ENCODE measurements at regions of chr14 and their contacts with region 1.

Region 1: GRCh38 chr14:67666750-67667449 is 7.5 kb downstream of the VTI1B start:
- DNase-seq: peak in 19 of 35 experiments; percentile 6 to 75 (median 16)
- ATAC-seq: peak; percentile 73 to 90 (median 78)
- H3K4me3 ChIP-seq: no peak overlapping the region
- H3K4me3 Mint-ChIP-seq: no peak overlapping the region
- H3K27ac ChIP-seq: no peak overlapping the region
- H3K27ac Mint-ChIP-seq: no peak overlapping the region
- H3K4me1 ChIP-seq: peaks cover 2 to 11% of the 10 kb centered on the region in 2 experiments
- H3K4me1 Mint-ChIP-seq: peaks cover 68 to 72% (median 69%) of the 10 kb centered on the region in 3 donors
- H3K27me3 ChIP-seq: no peaks in the 10 kb centered on the region
- H3K27me3 Mint-ChIP-seq: no peaks in the 10 kb centered on the region

Region 2: GRCh38 chr14:67426983-67427606 is 239.8 kb before region 1 on chr14:
- CTCF ChIA-PET with region 1: interaction called, 6 to 10 read pairs
- POLR2A ChIA-PET with region 1: no interaction called
- DNase-seq: peak; percentile 53 to 86 (median 69)
- ATAC-seq: peak; percentile 86 to 91 (median 88)
- H3K4me3 ChIP-seq: no peak overlapping the region
- H3K4me3 Mint-ChIP-seq: no peak overlapping the region
- H3K27ac ChIP-seq: no peak overlapping the region
- H3K27ac Mint-ChIP-seq: no peak overlapping the region
- H3K4me1 ChIP-seq: peaks cover 0 to 8% of the 10 kb centered on the region in 2 experiments
- H3K4me1 Mint-ChIP-seq: peaks cover 0 to 1% (median 0%) of the 10 kb centered on the region in 3 donors
- H3K27me3 ChIP-seq: peaks cover 0 to 41% of the 10 kb centered on the region in 2 experiments
- H3K27me3 Mint-ChIP-seq: peaks cover 11 to 18% of the 10 kb centered on the region in 2 donors

Region 3: DNA sequence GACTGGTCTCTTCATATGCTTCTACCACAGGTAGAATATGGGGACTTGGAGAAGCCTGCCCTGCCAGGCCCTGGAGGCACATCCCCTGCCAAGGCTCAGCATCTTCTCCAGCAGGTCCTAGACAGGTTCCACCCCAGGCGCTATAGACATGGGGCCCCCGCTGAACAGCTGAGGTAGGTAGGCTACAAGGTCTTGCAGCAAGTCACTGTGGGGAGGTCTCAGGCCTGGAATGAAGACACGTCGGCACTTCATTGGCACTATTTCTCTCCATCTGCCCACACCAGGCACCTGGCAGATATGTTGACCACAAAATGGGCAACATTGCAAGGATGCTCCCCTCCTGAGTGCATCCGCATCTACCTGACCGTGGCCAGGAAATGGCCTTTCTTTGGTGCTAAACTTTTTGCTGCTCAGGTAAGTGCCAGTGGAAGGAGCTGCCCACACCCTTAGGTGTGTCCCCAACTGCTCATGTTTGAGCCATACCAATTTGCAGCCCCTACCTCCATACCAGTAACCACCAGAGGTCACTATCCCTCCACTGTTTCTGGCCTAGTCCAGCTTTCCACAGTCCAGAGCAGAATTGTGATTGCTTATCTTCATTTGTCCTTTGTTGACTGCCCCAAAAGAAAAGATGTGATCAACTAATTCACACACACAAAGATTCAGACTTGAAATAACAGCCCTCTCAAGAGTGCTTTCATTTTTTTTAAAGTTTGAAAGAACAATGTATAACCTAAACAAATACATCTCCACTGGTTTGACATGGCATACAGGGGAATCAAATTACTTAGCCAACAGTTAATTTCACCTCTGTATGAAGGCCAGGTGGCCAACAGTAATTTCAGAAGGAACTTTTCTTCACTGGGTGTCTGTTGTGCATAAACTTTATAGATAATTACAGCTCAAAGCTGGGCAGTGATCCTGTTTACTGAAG is 82.9 kb before region 1 on chr14:
- CTCF ChIA-PET with region 1: interaction called, 3 to 18 read pairs
- POLR2A ChIA-PET with region 1: interaction called in 1 of 2 experiments, 3 read pairs
- DNase-seq: peak in 11 of 35 experiments; percentile 10 to 63 (median 19)
- ATAC-seq: peak; percentile 52 to 73 (median 64)
- H3K4me3 ChIP-seq: no peak overlapping the region
- H3K4me3 Mint-ChIP-seq: no peak overlapping the region
- H3K27ac ChIP-seq: no peak overlapping the region
- H3K27ac Mint-ChIP-seq: no peak overlapping the region
- H3K4me1 ChIP-seq: no peaks in the 10 kb centered on the region
- H3K4me1 Mint-ChIP-seq: no peaks in the 10 kb centered on the region
- H3K27me3 ChIP-seq: no peaks in the 10 kb centered on the region
- H3K27me3 Mint-ChIP-seq: no peaks in the 10 kb centered on the region

Region 4: DNA sequence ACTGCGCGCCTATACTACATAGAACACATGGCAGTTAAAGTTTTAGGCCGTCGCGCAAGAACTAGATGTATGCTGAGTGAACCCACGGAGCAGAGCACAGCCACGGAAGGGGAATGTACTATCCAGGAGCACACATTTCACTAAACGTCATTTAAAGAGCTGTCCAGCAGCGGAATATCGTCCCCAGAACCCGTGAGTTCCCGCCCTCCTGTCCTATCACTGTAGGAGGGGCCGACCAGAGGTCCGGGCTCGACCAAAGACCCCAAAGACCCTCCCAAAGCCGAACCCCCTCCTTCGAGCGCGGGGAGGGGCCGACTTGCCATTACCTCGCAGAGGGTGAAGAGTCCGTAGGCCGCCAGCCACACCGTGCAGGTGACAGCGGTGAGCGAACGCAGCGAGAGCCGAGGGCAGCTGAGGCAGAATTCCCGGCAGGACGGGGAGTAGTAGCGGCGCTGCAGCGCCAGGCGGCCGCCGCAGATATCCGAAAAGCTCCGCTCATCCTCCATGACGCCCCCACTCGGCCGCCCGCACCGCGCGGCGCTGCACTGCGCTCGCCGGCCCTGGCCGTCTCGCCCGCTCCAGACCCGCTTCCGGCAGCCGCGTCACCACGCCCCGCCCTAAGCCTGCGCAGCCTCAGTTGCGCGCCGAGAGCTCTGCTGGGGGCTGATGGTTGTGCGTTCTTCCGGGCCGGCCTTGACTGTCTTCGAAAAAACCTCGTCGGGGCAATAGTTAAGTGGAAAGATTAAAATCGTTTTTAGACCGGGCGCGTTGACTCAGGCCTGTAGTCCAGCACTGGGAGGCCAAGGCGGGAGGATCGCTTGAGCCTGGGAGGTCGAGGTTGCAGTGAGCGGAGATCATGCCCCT is 67.0 kb before region 1 on chr14 and contains the start of gene PIGH:
- CTCF ChIA-PET with region 1: interaction called in 1 of 2 experiments, 11 read pairs
- POLR2A ChIA-PET with region 1: interaction called in 1 of 2 experiments, 4 read pairs
- DNase-seq: peak; percentile 84 to 97 (median 92)
- ATAC-seq: peak; percentile 97
- H3K4me3 ChIP-seq: peak within 1 kb of the TSS; percentile 88 to 90
- H3K4me3 Mint-ChIP-seq: peak within 1 kb of the TSS; percentile 87 to 98 (median 98)
- H3K27ac ChIP-seq: peak within 1 kb of the TSS; percentile 87
- H3K27ac Mint-ChIP-seq: peak within 1 kb of the TSS; percentile 94 to 95
- H3K4me1 ChIP-seq: peaks cover 11 to 14% of the 10 kb centered on the region in 2 experiments
- H3K4me1 Mint-ChIP-seq: peaks cover 37 to 52% (median 48%) of the 10 kb centered on the region in 3 donors
- H3K27me3 ChIP-seq: no peaks in the 10 kb centered on the region
- H3K27me3 Mint-ChIP-seq: no peaks in the 10 kb centered on the region
- total RNA-seq, gene PIGH: 28.7 to 46.8 (median 35.1) TPM

Region 5: DNA sequence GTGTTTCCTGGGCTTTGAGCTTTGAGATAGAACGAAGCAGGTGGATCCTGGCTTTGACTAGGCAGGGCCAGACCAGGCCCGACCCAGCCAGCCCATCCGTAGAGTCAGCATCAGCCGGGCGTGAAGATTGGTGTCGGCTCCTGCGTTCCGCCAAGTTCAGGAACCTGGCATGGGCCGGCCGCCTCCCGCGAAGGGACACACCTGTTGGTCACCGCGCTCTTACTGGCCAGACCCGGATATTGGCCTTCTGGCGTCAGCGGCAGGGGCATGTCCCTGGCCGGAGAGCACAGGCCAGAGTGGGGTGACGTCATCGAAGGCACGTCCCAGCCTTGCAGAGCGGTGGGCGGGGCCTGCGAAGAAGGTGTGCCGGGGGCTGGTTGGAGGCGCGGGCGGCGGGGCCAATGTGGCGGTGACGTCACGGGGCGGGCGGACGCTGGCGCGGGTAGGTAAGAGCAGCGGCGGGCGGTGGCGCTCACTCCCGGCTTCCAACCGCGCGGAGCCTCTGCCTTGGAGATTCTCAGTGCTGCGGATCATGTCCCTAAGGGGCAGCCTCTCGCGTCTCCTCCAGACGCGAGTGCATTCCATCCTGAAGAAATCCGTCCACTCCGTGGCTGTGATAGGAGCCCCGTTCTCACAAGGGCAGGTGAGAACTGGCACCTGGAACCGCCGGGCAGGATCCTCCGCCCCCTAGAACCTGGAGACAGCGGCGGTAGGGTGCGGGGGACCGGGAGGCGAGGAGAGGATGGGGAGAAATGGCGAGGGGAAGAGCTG is 47.3 kb before region 1 on chr14 and contains the start of gene ARG2:
- CTCF ChIA-PET with region 1: interaction called, 14 to 42 read pairs
- POLR2A ChIA-PET with region 1: interaction called in 1 of 2 experiments, 4 read pairs
- DNase-seq: peak; percentile 88 to 99 (median 96)
- ATAC-seq: peak; percentile 91 to 98 (median 98)
- H3K4me3 ChIP-seq: peak within 1 kb of the TSS; percentile 79 to 92
- H3K4me3 Mint-ChIP-seq: peak within 1 kb of the TSS; percentile 83 to 89 (median 85)
- H3K27ac ChIP-seq: peak within 1 kb of the TSS; percentile 92
- H3K27ac Mint-ChIP-seq: peak within 1 kb of the TSS; percentile 80 to 87
- H3K4me1 ChIP-seq: peaks cover 19 to 27% of the 10 kb centered on the region in 2 experiments
- H3K4me1 Mint-ChIP-seq: peaks cover 35 to 38% (median 36%) of the 10 kb centered on the region in 3 donors
- H3K27me3 ChIP-seq: peaks cover 2 to 11% of the 10 kb centered on the region in 2 experiments
- H3K27me3 Mint-ChIP-seq: peaks cover 0 to 2% of the 10 kb centered on the region in 2 donors
- total RNA-seq, gene ARG2: 0.62 to 2.6 (median 1.1) TPM

Region 6: DNA sequence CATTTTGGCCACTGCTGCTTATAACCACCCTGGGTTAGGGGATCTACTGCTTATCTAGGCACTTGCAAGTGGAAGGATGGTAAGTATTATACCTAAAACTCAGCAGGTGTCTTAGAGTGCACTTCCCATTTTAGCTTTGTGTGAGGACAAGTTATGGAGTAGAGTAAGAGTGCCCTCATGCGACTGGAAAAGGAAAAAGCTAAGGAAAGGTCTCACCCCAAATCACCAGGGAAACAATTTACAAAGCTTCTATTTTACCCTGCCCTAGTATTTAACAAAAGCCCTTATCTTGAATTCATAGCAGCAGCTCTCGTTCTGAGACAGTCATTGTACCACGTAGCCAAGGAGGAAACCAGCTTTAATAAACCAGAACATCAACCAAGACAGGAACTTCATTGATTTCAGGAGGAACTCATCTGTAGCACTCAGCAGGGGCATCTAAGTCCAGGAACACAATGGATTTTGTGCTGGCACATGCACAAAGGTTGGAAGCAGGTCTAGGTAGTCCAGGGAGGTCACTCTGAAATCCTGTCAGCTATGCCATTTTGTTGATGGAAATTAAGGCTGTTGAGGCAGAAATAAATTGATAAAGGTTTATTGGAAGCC is 37.7 kb after region 1 on chr14:
- CTCF ChIA-PET with region 1: interaction called, 3 to 18 read pairs
- POLR2A ChIA-PET with region 1: no interaction called
- DNase-seq: peak in 19 of 35 experiments; percentile 4 to 79 (median 15)
- ATAC-seq: peak; percentile 67 to 82 (median 80)
- H3K4me3 ChIP-seq: no peak overlapping the region
- H3K4me3 Mint-ChIP-seq: no peak overlapping the region
- H3K27ac ChIP-seq: no peak overlapping the region
- H3K27ac Mint-ChIP-seq: no peak overlapping the region
- H3K4me1 ChIP-seq: no peaks in the 10 kb centered on the region
- H3K4me1 Mint-ChIP-seq: no peaks in the 10 kb centered on the region
- H3K27me3 ChIP-seq: no peaks in the 10 kb centered on the region
- H3K27me3 Mint-ChIP-seq: peaks cover 5% of the 10 kb centered on the region in 2 donors

Region 7: GRCh38 chr14:67766172-67766680 is 99.3 kb after region 1 on chr14:
- CTCF ChIA-PET with region 1: no interaction called
- POLR2A ChIA-PET with region 1: no interaction called
- DNase-seq: no peak
- ATAC-seq: no peak
- H3K4me3 ChIP-seq: no peak overlapping the region
- H3K4me3 Mint-ChIP-seq: no peak overlapping the region
- H3K27ac ChIP-seq: no peak overlapping the region
- H3K27ac Mint-ChIP-seq: no peak overlapping the region
- H3K4me1 ChIP-seq: no peaks in the 10 kb centered on the region
- H3K4me1 Mint-ChIP-seq: no peaks in the 10 kb centered on the region
- H3K27me3 ChIP-seq: no peaks in the 10 kb centered on the region
- H3K27me3 Mint-ChIP-seq: no peaks in the 10 kb centered on the region

Measured in T-cell (primary cell).